Activated CD8-positive, alpha-beta T cell treated with anti-CD3 and anti-CD28 coated beads for 36 hours (primary cell): ENCODE measurements at regions of chr11 and their contacts with region 1.

Region 1: GRCh38 chr11:108835624-108836023 is 170.8 kb downstream of the DDX10 start:
- DNase-seq: no peak
- ATAC-seq: no peak
- H3K4me3 Mint-ChIP-seq: no peak overlapping the region
- H3K27ac Mint-ChIP-seq: no peak overlapping the region
- H3K4me1 Mint-ChIP-seq: peaks cover 17% of the 10 kb centered on the region
- H3K27me3 Mint-ChIP-seq: no peaks in the 10 kb centered on the region
- CTCF ChIP-seq: no peak

Region 2: DNA sequence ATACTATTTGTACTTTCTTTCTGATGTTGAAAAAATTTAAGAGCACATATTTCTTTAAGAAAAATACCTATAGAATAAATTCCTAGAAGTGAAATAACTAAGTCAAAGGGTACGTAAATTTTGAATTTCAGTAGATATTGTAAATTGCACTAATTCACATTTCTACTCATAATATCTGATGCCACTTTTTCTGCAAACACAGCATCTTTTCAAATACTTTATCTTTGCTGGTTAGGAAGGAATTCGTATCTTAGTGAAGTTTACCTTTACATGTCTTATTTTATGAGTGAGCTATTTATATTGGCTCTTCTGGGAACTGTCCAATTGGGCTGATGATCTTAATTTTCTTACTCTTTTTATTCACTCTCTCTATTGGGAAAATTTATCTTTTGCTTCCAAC is 22.5 kb before region 1 on chr11:
- CTCF ChIA-PET with region 1: no interaction called
- POLR2A ChIA-PET with region 1: no interaction called
- intact Hi-C with region 1: loop called (anchors 2 kb)
- DNase-seq: no peak
- ATAC-seq: no peak
- H3K4me3 Mint-ChIP-seq: no peak overlapping the region
- H3K27ac Mint-ChIP-seq: no peak overlapping the region
- H3K4me1 Mint-ChIP-seq: peaks cover 4% of the 10 kb centered on the region
- H3K27me3 Mint-ChIP-seq: no peaks in the 10 kb centered on the region
- CTCF ChIP-seq: no peak

Region 3: DNA sequence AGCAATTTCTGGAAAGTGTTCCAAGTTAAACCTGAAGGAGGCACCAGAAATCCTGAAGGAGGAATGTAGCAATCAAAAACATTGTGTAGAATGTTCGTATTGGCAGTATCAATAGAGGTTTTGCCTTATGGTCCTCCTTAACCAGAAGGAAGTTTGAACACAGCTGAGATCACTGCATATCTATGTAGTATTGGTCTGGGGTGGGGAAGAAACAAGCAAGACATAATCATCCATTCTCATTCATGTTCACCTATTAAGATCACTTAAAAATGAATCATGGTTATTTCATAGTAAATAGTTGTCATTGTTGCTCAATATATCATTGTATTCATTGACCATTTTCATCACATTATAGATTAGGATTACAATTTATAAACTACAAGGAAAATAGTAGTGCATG is 10.2 kb before region 1 on chr11:
- CTCF ChIA-PET with region 1: no interaction called
- POLR2A ChIA-PET with region 1: no interaction called
- intact Hi-C with region 1: no loop called
- DNase-seq: no peak
- ATAC-seq: no peak
- H3K4me3 Mint-ChIP-seq: no peak overlapping the region
- H3K27ac Mint-ChIP-seq: no peak overlapping the region
- H3K4me1 Mint-ChIP-seq: peaks cover 12% of the 10 kb centered on the region
- H3K27me3 Mint-ChIP-seq: no peaks in the 10 kb centered on the region
- CTCF ChIP-seq: no peak